CD4-positive, alpha-beta memory T cell (primary cell): ENCODE measurements at regions of chr17 and their contacts with region 1.

Region 1: DNA sequence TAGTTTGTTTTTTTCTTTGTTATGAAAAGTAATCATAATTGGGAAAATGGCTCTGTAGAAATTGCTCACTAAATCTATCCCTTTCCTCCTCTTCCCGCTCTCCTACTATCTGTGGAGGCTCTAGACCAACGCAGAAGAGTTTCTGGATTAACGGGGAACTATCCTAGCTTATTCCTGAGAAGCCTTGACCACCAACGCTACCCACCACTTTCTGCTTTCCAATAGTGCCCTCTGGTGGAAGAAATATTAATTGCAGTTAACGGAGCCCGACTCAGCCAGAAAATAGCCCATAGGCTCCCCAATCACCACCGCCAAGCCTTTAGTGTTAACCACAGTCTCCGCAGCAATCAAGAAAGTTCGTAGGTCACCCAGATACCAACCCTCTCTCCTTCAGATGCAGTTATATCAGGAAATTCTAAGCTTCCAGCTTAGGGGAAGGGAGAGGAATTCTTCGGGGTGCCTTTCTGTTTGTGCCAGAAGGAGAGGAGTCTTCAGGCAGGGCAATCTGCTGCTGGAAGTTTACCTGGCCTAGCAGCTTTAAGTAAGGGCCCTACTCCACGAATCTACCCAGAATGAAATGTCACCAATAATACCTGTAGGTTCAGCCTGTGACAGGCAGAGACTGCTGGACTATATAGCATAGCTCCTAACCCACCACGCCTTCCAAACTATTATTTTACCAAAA is 23.0 kb upstream of the NSRP1 start:
- DNase-seq: peak; percentile 41 to 66 (median 52)
- H3K4me3 ChIP-seq: no peak overlapping the region
- H3K4me3 Mint-ChIP-seq: peak overlapping the region in 1 of 8 donors; percentile 24
- H3K27ac ChIP-seq: no peak overlapping the region
- H3K27ac Mint-ChIP-seq: no peak overlapping the region
- H3K4me1 ChIP-seq: peaks cover 6% of the 10 kb centered on the region
- H3K4me1 Mint-ChIP-seq: peaks cover 0 to 8% (median 3%) of the 10 kb centered on the region in 4 donors
- H3K27me3 ChIP-seq: no peaks in the 10 kb centered on the region
- H3K27me3 Mint-ChIP-seq: peaks cover 15 to 29% of the 10 kb centered on the region in 2 donors

Region 2: DNA sequence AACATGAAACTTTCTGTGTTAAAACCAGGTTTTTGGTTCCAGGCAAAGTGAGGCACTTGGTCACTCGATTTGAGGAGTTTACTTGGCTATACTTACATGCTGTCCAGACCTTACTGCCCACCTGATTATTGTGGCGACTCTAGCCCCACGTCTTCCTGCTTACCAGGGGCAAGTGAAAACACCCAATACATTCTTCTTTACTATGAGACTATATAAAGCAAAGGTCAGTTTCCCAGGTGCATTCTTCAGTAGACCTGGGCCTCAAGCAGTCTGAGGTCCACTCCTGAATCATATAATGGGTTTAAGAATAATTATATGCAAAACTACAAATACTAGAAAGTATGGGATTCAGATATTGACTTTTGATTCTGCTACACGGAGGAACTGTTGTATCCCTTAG is 65.9 kb before region 1 on chr17:
- CTCF ChIA-PET with region 1: interaction called, 9 read pairs
- POLR2A ChIA-PET with region 1: interaction called, 3 read pairs
- intact Hi-C with region 1: loop called (anchors 2 kb)
- DNase-seq: no peak
- H3K4me3 ChIP-seq: no peak overlapping the region
- H3K4me3 Mint-ChIP-seq: no peak overlapping the region
- H3K27ac ChIP-seq: no peak overlapping the region
- H3K27ac Mint-ChIP-seq: no peak overlapping the region
- H3K4me1 ChIP-seq: no peaks in the 10 kb centered on the region
- H3K4me1 Mint-ChIP-seq: peaks cover 0 to 2% (median 0%) of the 10 kb centered on the region in 4 donors
- H3K27me3 ChIP-seq: no peaks in the 10 kb centered on the region
- H3K27me3 Mint-ChIP-seq: no peaks in the 10 kb centered on the region

Region 3: DNA sequence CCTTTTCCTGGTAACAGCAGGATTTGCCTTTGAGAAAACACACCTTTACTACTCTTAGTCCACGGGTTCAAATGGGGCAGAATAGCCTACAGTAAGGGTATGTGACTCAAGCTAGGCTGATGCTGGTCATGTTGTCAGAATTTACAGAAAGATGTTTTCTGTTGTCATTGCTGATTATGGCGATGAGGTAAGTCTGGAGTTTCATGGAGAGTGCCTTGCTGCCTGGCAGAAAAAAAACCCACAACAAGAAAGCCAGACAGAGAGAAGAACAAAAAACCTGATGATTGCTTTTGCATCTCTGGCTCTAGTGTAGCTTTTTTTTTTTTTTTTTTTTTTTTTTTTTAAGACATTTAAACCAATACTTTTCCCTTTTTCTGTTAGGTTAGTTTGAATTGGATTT is 94.0 kb after region 1 on chr17:
- CTCF ChIA-PET with region 1: no interaction called
- POLR2A ChIA-PET with region 1: no interaction called
- intact Hi-C with region 1: no loop called
- DNase-seq: no peak
- H3K4me3 ChIP-seq: no peak overlapping the region
- H3K4me3 Mint-ChIP-seq: no peak overlapping the region
- H3K27ac ChIP-seq: no peak overlapping the region
- H3K27ac Mint-ChIP-seq: peak overlapping the region in 2 of 7 donors; percentile 8 to 66
- H3K4me1 ChIP-seq: no peaks in the 10 kb centered on the region
- H3K4me1 Mint-ChIP-seq: peaks cover 0 to 2% (median 0%) of the 10 kb centered on the region in 4 donors
- H3K27me3 ChIP-seq: no peaks in the 10 kb centered on the region
- H3K27me3 Mint-ChIP-seq: no peaks in the 10 kb centered on the region